SK-N-SH (cell line): ENCODE measurements at regions of chr11 and their contacts with region 1.

Region 1: GRCh38 chr11:45655347-45655756 is 10.1 kb downstream of the CHST1 start:
- DNase-seq: peak; percentile 93
- H3K4me3 ChIP-seq: peak overlapping the region in 1 of 2 experiments; percentile 40; a peak in 1 of 4 replicates
- H3K27ac ChIP-seq: no peak overlapping the region
- H3K4me1 ChIP-seq: peaks cover 19 to 26% of the 10 kb centered on the region in 2 experiments; a peak in 3 of 4 replicates
- H3K27me3 ChIP-seq: no peaks in the 10 kb centered on the region
- CTCF ChIP-seq: peak; percentile 90
- EP300 ChIP-seq: no peak
- RAD21 ChIP-seq: peak; percentile 84

Region 2: DNA sequence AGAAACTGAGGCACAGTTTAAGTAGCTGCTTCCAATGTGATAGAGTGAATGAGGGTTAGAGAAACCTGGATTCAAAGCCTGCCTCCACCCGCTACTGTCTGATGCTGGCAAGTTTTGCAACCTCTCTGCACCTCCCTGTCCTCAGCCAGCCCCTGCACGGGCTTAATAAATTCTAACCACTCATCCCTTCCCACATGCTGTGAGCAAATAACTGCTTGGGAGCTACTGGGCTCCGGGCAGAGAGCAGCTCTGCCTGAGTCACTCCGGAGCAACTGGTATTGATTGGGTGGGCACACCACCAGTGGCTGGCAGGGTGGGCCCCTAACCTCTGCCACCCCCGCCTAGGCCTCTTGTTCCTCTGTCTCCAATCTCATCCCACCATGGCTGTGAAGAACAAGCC is 264.9 kb before region 1 on chr11:
- CTCF ChIA-PET with region 1: interaction called, 15 read pairs
- POLR2A ChIA-PET with region 1: no interaction called
- DNase-seq: no peak
- H3K4me3 ChIP-seq: no peak overlapping the region
- H3K27ac ChIP-seq: no peak overlapping the region
- H3K4me1 ChIP-seq: peaks cover 8% of the 10 kb centered on the region in 2 experiments; a peak in 1 of 4 replicates
- H3K27me3 ChIP-seq: no peaks in the 10 kb centered on the region
- CTCF ChIP-seq: no peak
- EP300 ChIP-seq: no peak
- RAD21 ChIP-seq: no peak

Region 3: DNA sequence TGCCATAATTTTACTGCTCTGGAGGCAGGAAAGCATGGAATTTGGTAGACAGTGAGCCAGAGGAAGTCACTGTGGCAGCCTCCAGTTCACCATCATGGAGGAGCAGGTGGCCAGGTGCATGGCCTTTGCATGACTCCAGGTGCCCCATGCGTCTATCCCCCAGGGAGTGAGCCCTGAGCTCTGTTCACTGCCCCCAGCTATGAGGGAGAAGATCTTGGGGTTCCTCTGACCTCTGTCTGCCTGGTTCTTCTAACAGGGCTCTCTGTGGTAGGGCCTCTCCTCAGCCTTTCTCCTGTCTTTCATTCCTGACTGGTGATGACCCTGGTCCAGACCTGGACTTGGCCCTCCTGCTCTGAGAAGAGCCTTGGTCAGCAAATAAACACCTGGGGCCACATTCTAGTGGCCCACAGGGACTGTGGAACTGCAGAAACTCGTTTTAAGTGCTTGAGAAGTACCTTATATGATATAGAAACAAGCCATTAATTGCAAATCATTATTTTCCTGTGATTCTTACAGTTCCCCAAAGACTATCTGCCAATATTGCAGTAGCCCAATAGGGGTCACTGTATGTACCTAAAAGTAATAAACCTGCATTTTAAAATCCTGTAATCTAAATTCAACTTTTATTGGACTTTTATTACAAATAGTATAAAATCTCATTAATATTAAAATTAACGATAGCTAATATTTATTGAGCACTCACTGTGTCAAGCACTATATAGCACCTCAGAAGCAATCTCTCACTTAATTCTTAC is 249.3 kb before region 1 on chr11:
- CTCF ChIA-PET with region 1: interaction called, 28 read pairs
- POLR2A ChIA-PET with region 1: no interaction called
- DNase-seq: no peak
- H3K4me3 ChIP-seq: no peak overlapping the region
- H3K27ac ChIP-seq: no peak overlapping the region
- H3K4me1 ChIP-seq: peaks cover 11 to 14% of the 10 kb centered on the region in 2 experiments; a peak in 3 of 4 replicates
- H3K27me3 ChIP-seq: no peaks in the 10 kb centered on the region
- CTCF ChIP-seq: peak; percentile 73
- EP300 ChIP-seq: no peak
- RAD21 ChIP-seq: peak; percentile 68

Region 4: DNA sequence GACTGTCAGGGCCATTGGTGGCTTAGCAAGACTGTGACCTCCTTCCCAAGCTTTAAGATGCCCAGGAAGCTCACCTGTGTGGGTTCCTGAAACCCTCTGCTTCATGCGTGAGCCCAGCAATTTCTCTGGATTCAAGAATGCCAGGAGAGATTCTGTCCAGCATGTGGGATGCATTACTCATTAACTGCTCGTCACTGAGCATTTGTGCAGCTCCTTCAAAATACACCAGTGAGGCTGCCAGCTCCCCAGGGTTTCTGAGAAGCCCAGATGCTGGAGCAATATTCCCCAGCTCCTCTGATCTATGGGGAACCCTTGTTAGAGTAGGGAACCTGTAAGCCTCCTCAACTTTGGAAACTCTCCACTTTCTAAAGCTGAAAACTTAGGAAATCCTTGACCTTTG is 116.4 kb before region 1 on chr11:
- CTCF ChIA-PET with region 1: no interaction called
- POLR2A ChIA-PET with region 1: no interaction called
- DNase-seq: no peak
- H3K4me3 ChIP-seq: no peak overlapping the region
- H3K27ac ChIP-seq: no peak overlapping the region
- H3K4me1 ChIP-seq: no peaks in the 10 kb centered on the region
- H3K27me3 ChIP-seq: no peaks in the 10 kb centered on the region; the same call in 1 of the 2 replicates
- CTCF ChIP-seq: no peak
- EP300 ChIP-seq: no peak
- RAD21 ChIP-seq: no peak

Region 5: GRCh38 chr11:45560155-45560912 is 95.0 kb before region 1 on chr11:
- CTCF ChIA-PET with region 1: interaction called, 10 read pairs
- POLR2A ChIA-PET with region 1: no interaction called
- DNase-seq: peak; percentile 71
- H3K4me3 ChIP-seq: no peak overlapping the region
- H3K27ac ChIP-seq: no peak overlapping the region
- H3K4me1 ChIP-seq: peaks cover 0 to 11% of the 10 kb centered on the region in 2 experiments; a peak in 1 of 4 replicates
- H3K27me3 ChIP-seq: no peaks in the 10 kb centered on the region; the same call in 1 of the 2 replicates
- CTCF ChIP-seq: no peak
- EP300 ChIP-seq: no peak
- RAD21 ChIP-seq: no peak

Region 6: GRCh38 chr11:45754261-45754709 is 98.9 kb after region 1 on chr11:
- CTCF ChIA-PET with region 1: interaction called, 11 read pairs
- POLR2A ChIA-PET with region 1: no interaction called
- DNase-seq: peak; percentile 39
- H3K4me3 ChIP-seq: no peak overlapping the region
- H3K27ac ChIP-seq: no peak overlapping the region
- H3K4me1 ChIP-seq: peaks cover 0 to 14% of the 10 kb centered on the region in 2 experiments; a peak in 2 of 4 replicates
- H3K27me3 ChIP-seq: no peaks in the 10 kb centered on the region; the same call in 1 of the 2 replicates
- CTCF ChIP-seq: no peak
- EP300 ChIP-seq: no peak
- RAD21 ChIP-seq: no peak